ENCODE measurements at regions of chr1 and their contacts with region 1.

Region 1: DNA sequence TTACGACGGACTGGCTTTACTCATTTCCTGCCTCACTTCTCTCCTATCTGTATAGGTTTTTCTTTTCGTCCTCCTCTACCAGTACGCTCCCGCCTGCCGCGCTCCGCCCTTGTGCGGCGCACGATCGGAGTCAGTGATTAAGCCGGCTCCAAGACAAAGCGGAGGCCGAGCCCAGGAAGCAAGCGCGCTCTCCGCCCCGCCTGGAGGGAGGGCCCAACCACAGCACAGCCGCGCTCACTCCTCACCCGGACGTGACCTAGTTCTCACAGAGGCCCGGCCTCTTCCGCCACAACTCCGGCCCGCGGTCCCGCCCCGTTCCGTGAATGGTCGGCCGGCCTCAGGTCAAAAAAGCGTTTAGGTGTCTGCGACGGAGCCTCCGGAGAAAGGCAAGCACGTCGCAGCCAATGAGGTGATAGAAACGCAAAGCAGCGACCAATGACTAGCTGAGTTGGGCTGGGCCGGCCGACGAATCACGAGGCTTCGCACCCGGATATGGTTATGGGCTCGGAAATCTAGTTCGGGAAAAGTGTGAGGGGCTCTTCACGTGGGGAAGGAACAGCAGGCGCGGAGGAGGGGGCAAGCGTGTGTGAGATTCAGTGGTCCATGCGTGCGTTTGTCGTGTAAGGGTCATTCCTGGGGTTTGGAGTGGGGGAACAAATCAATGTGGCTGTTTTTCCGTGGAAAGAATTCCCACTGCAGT is at the start of gene METTL13:
- DNase-seq: peak; percentile 99
- H3K4me3 ChIP-seq: peak within 1 kb of the TSS; percentile 97
- H3K4me3 Mint-ChIP-seq: peak within 1 kb of the TSS; percentile 91
- H3K27ac Mint-ChIP-seq: peak within 1 kb of the TSS; percentile 97
- H3K4me1 ChIP-seq: no peaks in the 10 kb centered on the region; the same call in 1 of the 2 replicates
- H3K4me1 Mint-ChIP-seq: peaks cover 6% of the 10 kb centered on the region
- H3K27me3 ChIP-seq: no peaks in the 10 kb centered on the region
- H3K27me3 Mint-ChIP-seq: no peaks in the 10 kb centered on the region
- CTCF ChIP-seq: no peak
- total RNA-seq, gene METTL13: 36.9 and 40.4 TPM in 2 replicates

Region 2: DNA sequence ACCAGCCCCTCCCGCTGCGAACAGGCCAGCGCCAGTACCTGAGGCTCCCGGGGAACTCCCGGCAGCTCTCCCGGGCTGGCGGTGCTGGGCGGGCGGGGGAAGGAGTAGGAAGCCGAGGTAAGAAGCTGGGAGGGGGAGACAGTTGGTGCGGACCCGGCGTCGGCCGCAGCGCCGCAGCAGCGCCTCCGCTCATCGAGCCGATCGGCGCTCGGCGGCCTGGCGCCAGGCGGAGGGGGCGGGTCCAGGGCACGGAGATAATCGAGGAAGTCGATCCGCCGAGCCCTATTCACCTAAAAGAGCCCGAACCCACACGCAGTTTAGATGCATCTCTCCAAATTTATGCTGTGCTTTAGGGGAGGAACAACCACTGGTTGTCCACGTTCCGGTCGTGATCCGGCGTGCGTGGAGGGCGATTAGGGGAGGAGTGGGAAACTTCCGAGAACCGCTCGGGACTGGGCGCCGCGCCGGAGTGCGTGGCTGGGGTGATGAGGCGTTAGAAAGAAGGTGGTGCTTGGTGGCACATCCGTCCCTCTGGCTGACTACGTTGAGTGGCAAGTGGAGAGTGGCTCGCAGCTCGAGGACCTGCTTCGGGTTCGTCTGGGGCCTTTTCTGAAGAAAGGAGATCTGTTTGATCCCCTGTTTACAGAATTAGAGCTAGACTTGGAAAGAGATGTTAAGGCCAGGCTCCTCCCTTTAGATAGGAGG is 39.3 kb before region 1 on chr1 and contains the start of gene VAMP4:
- CTCF ChIA-PET with region 1: no interaction called
- POLR2A ChIA-PET with region 1: interaction called, 7 read pairs
- intact Hi-C with region 1: loop called (anchors 1 kb)
- DNase-seq: peak; percentile 83 to 87
- H3K4me3 ChIP-seq: peak within 1 kb of the TSS; percentile 86
- H3K4me3 Mint-ChIP-seq: peak within 1 kb of the TSS; percentile 93
- H3K27ac Mint-ChIP-seq: peak within 1 kb of the TSS; percentile 92
- H3K4me1 ChIP-seq: 0 out of 2 replicates have a peak, but pooled peaks cover 7% of the 10 kb centered on the region
- H3K4me1 Mint-ChIP-seq: peaks cover 7% of the 10 kb centered on the region
- H3K27me3 ChIP-seq: no peaks in the 10 kb centered on the region
- H3K27me3 Mint-ChIP-seq: no peaks in the 10 kb centered on the region
- CTCF ChIP-seq: no peak
- total RNA-seq, gene VAMP4: 4.3 and 4.9 TPM in 2 replicates